B cell (primary cell): ENCODE measurements at regions of chr17 and their contacts with region 1.

Region 1: GRCh38 chr17:37744961-37745800 is at the start of gene HNF1B:
- DNase-seq: peak; percentile 90
- ATAC-seq: peak; percentile 81
- H3K4me3 ChIP-seq: peak within 1 kb of the TSS; percentile 13 to 46 (median 41)
- H3K4me3 Mint-ChIP-seq: peak within 1 kb of the TSS; percentile 84
- H3K27ac ChIP-seq: no peak within 1 kb of the TSS
- H3K27ac Mint-ChIP-seq: peak within 1 kb of the TSS; percentile 73
- H3K4me1 ChIP-seq: peaks cover 51 to 62% of the 10 kb centered on the region in 2 donors
- H3K4me1 Mint-ChIP-seq: peaks cover 42% of the 10 kb centered on the region
- H3K27me3 ChIP-seq: peaks cover 0 to 84% (median 61%) of the 10 kb centered on the region in 4 experiments
- H3K27me3 Mint-ChIP-seq: peaks cover 56% of the 10 kb centered on the region
- CTCF ChIP-seq: no peak
- total RNA-seq, gene HNF1B: 1.5 and 1.6 TPM in 2 replicates

Region 2: DNA sequence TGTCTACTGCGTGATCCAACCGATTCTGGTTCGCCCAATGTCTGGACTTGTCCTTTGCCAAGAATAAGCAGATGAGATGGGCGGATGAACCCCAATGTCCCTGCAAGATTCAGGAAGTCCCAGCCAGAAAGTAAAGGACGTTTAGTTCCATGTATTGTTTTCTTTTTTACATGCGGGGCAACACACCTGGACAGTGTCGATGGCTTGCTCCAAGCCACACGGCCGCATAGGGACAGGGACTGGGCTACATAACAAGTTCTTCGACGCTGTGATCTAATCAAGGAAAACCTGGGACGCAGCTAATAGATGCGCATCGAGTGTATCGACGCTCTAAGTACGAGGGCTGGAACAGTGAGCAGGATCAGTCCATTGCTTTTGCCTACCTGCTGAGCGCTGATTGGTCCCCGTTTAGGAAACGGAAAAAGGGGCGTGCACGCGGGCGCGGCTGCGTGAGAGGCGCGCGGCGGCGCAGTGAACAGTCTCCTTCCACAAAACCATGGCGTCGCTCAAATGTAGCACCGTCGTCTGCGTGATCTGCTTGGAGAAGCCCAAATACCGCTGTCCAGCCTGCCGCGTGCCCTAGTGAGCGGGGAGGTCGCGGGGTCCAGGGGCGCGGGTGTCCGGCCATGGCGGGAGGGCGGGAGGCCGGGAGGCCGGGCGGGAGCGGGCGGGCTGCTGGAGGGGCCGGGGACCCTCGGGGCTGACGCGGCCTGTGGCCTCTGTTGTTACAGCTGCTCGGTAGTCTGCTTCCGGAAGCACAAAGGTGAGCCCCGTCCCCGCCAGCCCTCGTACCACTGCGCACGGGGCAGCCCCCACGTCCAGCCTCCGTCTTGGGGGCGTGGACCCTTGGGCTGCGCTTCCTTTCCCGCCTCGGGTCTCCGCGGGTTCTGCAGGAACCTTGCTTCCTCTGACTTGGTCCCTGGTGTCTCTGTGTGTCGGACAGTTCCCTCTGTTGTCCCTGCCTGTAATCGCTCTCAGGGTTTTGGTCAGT is 1258.7 kb before region 1 on chr17 and contains the start of gene ZNHIT3:
- CTCF ChIA-PET with region 1: no interaction called
- POLR2A ChIA-PET with region 1: no interaction called
- intact Hi-C with region 1: loop called (anchors 10 kb)
- DNase-seq: peak; percentile 93
- ATAC-seq: peak; percentile 89
- H3K4me3 ChIP-seq: peak within 1 kb of the TSS; percentile 59 to 95 (median 86)
- H3K4me3 Mint-ChIP-seq: peak within 1 kb of the TSS; percentile 99
- H3K27ac ChIP-seq: peak within 1 kb of the TSS; percentile 56 to 83
- H3K27ac Mint-ChIP-seq: peak within 1 kb of the TSS; percentile 99
- H3K4me1 ChIP-seq: peaks cover 31 to 38% of the 10 kb centered on the region in 2 donors
- H3K4me1 Mint-ChIP-seq: peaks cover 44% of the 10 kb centered on the region
- H3K27me3 ChIP-seq: peaks cover 0 to 16% (median 13%) of the 10 kb centered on the region in 4 experiments
- H3K27me3 Mint-ChIP-seq: peaks cover 10% of the 10 kb centered on the region
- CTCF ChIP-seq: no peak
- total RNA-seq, gene ZNHIT3: 50.5 and 53.3 TPM in 2 replicates

Region 3: DNA sequence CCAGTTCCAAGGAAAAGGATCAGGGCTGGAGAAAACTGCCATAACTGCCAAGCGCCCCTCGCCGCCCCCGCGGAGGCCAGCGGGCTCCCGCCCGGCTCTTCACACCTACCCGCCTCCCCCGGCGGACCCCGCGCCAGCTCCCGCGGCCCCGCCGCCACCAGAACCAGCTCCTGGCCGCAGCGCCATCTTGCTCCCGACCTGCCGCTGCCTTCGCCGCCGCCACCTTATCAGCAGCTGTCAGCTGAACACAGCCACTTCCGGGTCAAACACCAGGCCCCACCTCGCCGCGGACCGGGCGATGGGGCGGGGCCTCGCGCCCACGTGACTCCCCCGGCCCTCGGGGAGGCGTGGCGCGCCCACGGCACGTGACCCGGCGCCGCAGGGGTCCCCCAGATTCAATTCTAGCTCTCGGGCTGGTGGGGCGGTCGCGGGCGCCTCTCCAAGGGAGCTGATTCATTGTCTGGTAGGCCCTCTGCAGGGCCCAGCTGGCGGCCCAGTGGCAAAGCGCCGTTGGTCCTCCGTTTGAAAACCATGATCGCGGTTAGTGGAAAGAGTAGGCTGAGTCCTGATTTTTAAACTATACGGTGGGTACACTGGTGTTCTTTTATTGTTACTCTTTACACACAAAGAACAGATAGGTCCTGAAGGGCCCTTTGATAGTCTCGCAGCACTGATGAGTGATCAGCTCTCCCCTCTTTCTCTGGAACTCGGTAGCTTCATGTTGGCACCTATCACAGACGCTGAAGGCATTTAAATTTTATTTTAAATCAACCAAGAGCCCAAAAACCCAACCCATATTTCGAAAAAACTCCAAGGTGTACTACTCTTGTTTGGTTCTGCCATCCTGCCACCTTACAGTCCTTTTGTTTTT is 135.8 kb before region 1 on chr17 and contains the start of gene SYNRG:
- CTCF ChIA-PET with region 1: no interaction called
- POLR2A ChIA-PET with region 1: no interaction called
- intact Hi-C with region 1: no loop called
- DNase-seq: peak; percentile 97
- ATAC-seq: peak; percentile 87
- H3K4me3 ChIP-seq: peak within 1 kb of the TSS; percentile 80 to 94 (median 89)
- H3K4me3 Mint-ChIP-seq: peak within 1 kb of the TSS; percentile 95
- H3K27ac ChIP-seq: peak within 1 kb of the TSS; percentile 80 to 86
- H3K27ac Mint-ChIP-seq: peak within 1 kb of the TSS; percentile 97
- H3K4me1 ChIP-seq: peaks cover 24 to 37% of the 10 kb centered on the region in 2 donors
- H3K4me1 Mint-ChIP-seq: peaks cover 39% of the 10 kb centered on the region
- H3K27me3 ChIP-seq: no peaks in the 10 kb centered on the region
- H3K27me3 Mint-ChIP-seq: no peaks in the 10 kb centered on the region
- CTCF ChIP-seq: peak; percentile 70
- total RNA-seq, gene SYNRG: 113 and 115 TPM in 2 replicates

Region 4: DNA sequence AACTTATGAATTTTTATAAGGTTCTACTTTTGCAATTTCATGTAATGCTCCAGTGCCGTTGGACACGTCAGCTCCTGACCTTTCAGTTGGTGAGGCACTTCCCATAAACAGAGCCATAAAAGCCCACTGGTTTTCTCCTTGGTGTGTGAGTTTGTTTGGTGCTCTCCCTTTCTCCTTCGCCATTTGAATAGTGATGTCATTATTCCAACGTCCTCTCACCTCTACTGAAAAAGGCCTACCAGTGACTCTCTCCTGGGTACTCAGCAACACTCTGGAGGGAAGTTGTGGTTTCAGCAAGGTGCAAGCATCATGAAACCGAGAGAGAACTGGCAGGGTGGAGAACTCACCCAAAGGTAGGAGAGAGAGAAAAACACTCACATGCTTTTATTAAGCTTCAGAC is 29.3 kb after region 1 on chr17:
- CTCF ChIA-PET with region 1: interaction called, 3 read pairs
- POLR2A ChIA-PET with region 1: interaction called, 3 read pairs
- intact Hi-C with region 1: loop called (anchors 1 kb)
- DNase-seq: peak; percentile 79
- ATAC-seq: peak; percentile 94
- H3K4me3 ChIP-seq: no peak overlapping the region
- H3K4me3 Mint-ChIP-seq: peak overlapping the region; percentile 46
- H3K27ac ChIP-seq: peak overlapping the region; percentile 33 to 35
- H3K27ac Mint-ChIP-seq: peak overlapping the region; percentile 59
- H3K4me1 ChIP-seq: peaks cover 15 to 24% of the 10 kb centered on the region in 2 donors
- H3K4me1 Mint-ChIP-seq: peaks cover 40% of the 10 kb centered on the region
- H3K27me3 ChIP-seq: no peaks in the 10 kb centered on the region
- H3K27me3 Mint-ChIP-seq: no peaks in the 10 kb centered on the region
- CTCF ChIP-seq: no peak